ENCODE measurements at regions of chr17 and their contacts with region 1.

Region 1: GRCh38 chr17:20825539-20825938 is 217.3 kb downstream of the USP22 start:
- DNase-seq: no peak
- ATAC-seq: no peak
- H3K4me3 ChIP-seq: no peak overlapping the region
- H3K4me3 Mint-ChIP-seq: no peak overlapping the region
- H3K27ac ChIP-seq: no peak overlapping the region
- H3K27ac Mint-ChIP-seq: no peak overlapping the region
- H3K4me1 ChIP-seq: no peaks in the 10 kb centered on the region
- H3K4me1 Mint-ChIP-seq: no peaks in the 10 kb centered on the region
- H3K27me3 ChIP-seq: no peaks in the 10 kb centered on the region
- H3K27me3 Mint-ChIP-seq: peaks cover 11 to 19% (median 15%) of the 10 kb centered on the region in 5 donors

Region 2: GRCh38 chr17:20145567-20145966 is 680.0 kb before region 1 on chr17:
- CTCF ChIA-PET with region 1: no interaction called
- POLR2A ChIA-PET with region 1: interaction called, 10 read pairs
- intact Hi-C with region 1: no loop called
- DNase-seq: no peak
- ATAC-seq: no peak
- H3K4me3 ChIP-seq: no peak overlapping the region
- H3K4me3 Mint-ChIP-seq: no peak overlapping the region
- H3K27ac ChIP-seq: no peak overlapping the region
- H3K27ac Mint-ChIP-seq: no peak overlapping the region
- H3K4me1 ChIP-seq: no peaks in the 10 kb centered on the region
- H3K4me1 Mint-ChIP-seq: no peaks in the 10 kb centered on the region
- H3K27me3 ChIP-seq: no peaks in the 10 kb centered on the region
- H3K27me3 Mint-ChIP-seq: peaks cover 0 to 4% (median 0%) of the 10 kb centered on the region in 5 donors

Region 3: DNA sequence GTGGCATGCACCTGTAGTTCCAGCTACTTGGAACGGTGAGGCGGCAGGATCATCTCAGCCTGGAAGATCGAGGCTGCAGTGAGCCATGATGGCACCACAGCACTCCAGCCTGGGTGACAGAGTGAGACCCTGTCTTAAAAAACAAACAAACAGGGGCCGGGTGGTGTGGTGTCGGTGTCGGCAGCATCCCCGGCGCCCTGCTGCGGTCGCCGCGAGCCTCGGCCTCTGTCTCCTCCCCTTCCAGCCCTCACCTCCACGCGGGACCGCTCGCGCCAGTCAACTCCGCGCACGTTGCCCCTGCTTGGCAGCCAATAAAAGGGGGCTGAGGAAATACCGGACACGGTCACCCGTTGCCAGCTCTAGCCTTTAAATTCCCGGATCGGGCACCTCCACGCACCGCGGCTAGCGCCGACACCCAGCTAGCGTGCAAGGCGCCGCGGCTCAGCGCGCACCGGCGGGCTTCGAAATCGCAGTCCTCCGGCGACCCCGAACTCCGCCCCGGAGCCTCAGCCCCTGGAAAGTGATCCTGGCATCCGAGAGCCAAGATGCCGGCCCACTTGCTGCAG is 41.4 kb before region 1 on chr17:
- CTCF ChIA-PET with region 1: no interaction called
- POLR2A ChIA-PET with region 1: no interaction called
- intact Hi-C with region 1: no loop called
- DNase-seq: no peak
- ATAC-seq: no peak
- H3K4me3 ChIP-seq: no peak overlapping the region
- H3K4me3 Mint-ChIP-seq: no peak overlapping the region
- H3K27ac ChIP-seq: no peak overlapping the region
- H3K27ac Mint-ChIP-seq: no peak overlapping the region
- H3K4me1 ChIP-seq: no peaks in the 10 kb centered on the region
- H3K4me1 Mint-ChIP-seq: peaks cover 0 to 2% (median 0%) of the 10 kb centered on the region in 7 donors
- H3K27me3 ChIP-seq: no peaks in the 10 kb centered on the region
- H3K27me3 Mint-ChIP-seq: peaks cover 5 to 33% (median 24%) of the 10 kb centered on the region in 5 donors